ENCODE measurements at regions of chr10 and their contacts with region 1.

Region 1: GRCh38 chr10:46228563-46229071 is 58.2 kb upstream of the ANTXRL start:
- DNase-seq: peak; percentile 70
- ATAC-seq: peak; percentile 75
- H3K4me3 Mint-ChIP-seq: no peak overlapping the region
- H3K27ac Mint-ChIP-seq: no peak overlapping the region
- H3K4me1 Mint-ChIP-seq: no peaks in the 10 kb centered on the region
- H3K27me3 Mint-ChIP-seq: no peaks in the 10 kb centered on the region

Region 2: DNA sequence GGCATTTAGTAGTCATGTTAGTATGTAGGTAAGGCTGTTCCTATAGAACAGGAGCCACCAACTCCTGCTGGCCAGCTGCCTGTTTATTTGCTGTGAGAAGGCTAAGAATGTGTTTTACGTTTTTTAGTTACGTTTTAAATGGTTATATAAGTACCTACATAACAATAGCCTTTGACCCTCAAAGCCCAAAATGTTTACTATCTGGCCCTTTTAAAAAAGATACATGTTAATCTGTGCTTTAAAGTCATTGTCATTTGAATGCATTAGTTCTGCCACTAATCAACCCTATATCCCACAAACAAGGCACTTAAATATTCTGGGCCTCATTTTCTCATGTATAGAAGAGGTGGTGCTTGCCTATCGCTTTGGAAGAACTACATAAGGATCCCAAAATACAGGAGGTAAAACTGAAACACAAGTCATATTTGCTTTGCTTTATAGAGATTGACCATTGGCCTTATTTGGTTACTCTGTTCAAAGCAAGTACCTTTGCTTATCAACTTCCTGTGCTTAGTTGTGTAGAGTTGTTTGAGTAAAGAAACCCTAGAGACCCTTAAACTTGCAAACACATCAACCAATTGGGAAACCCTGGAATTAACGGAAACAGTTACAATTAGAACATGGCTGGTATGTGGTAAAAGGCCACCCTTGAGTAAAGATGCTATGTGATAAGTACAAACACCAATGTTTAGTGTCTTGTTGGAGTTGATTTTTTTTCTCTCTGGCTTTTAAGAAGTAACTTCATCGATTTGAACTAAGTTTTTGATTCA is 230.4 kb before region 1 on chr10:
- CTCF ChIA-PET with region 1: no interaction called
- POLR2A ChIA-PET with region 1: no interaction called
- DNase-seq: no peak
- ATAC-seq: no peak
- H3K4me3 Mint-ChIP-seq: no peak overlapping the region
- H3K27ac Mint-ChIP-seq: no peak overlapping the region
- H3K4me1 Mint-ChIP-seq: no peaks in the 10 kb centered on the region
- H3K27me3 Mint-ChIP-seq: no peaks in the 10 kb centered on the region

Region 3: GRCh38 chr10:46239247-46239646 is 10.6 kb after region 1 on chr10:
- CTCF ChIA-PET with region 1: interaction called, 11 read pairs
- POLR2A ChIA-PET with region 1: interaction called, 3 read pairs
- DNase-seq: no peak
- ATAC-seq: no peak
- H3K4me3 Mint-ChIP-seq: no peak overlapping the region
- H3K27ac Mint-ChIP-seq: no peak overlapping the region
- H3K4me1 Mint-ChIP-seq: peaks cover 26% of the 10 kb centered on the region
- H3K27me3 Mint-ChIP-seq: no peaks in the 10 kb centered on the region

Region 4: DNA sequence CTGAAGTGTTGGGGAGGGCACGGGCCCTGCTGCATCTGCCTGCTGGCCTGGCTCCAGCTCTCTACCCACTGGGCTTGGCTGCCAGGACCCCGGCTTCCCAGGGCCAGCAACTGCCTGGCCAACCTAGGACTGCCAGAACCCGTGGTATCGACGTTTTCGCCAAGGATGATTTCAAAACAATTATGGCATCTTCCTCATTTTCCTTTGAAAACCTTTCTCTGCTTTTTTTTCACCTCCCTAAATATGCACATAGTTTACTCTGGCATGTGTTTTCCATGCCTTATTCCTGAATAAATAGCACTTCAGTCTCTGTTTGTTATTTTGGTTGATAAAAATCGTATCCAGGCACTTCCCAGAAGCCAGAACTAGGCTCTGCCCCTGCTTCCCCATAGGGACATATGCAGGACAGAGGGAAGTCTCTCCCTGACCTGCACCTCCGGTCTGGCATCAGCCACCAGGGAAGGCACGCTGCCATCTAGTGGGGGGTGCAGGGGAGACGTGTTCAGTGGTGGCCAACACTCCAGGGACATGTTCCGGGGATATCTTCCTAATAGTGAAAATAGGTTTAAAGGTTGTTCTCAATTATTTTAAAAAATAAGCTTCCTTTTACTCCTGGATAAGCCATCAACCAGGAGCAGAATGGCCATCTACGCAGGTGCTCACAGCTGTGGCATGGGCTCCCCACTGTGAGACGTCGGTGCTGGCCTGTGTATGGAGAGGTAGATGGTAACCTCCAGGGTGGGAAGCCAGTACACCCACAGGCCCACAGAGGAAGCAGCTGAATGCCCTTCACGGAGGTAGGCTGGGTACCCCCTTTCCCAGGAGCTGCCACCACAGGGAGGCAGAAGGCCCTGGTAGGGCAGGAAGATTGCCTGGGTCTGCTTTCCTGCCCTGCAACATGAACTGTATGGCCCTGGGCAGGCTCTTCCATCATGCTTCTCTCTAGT is 27.5 kb after region 1 on chr10:
- CTCF ChIA-PET with region 1: interaction called, 15 read pairs
- POLR2A ChIA-PET with region 1: no interaction called
- DNase-seq: peak; percentile 59
- ATAC-seq: peak; percentile 78
- H3K4me3 Mint-ChIP-seq: no peak overlapping the region
- H3K27ac Mint-ChIP-seq: no peak overlapping the region
- H3K4me1 Mint-ChIP-seq: peaks cover 10% of the 10 kb centered on the region
- H3K27me3 Mint-ChIP-seq: no peaks in the 10 kb centered on the region

Region 5: DNA sequence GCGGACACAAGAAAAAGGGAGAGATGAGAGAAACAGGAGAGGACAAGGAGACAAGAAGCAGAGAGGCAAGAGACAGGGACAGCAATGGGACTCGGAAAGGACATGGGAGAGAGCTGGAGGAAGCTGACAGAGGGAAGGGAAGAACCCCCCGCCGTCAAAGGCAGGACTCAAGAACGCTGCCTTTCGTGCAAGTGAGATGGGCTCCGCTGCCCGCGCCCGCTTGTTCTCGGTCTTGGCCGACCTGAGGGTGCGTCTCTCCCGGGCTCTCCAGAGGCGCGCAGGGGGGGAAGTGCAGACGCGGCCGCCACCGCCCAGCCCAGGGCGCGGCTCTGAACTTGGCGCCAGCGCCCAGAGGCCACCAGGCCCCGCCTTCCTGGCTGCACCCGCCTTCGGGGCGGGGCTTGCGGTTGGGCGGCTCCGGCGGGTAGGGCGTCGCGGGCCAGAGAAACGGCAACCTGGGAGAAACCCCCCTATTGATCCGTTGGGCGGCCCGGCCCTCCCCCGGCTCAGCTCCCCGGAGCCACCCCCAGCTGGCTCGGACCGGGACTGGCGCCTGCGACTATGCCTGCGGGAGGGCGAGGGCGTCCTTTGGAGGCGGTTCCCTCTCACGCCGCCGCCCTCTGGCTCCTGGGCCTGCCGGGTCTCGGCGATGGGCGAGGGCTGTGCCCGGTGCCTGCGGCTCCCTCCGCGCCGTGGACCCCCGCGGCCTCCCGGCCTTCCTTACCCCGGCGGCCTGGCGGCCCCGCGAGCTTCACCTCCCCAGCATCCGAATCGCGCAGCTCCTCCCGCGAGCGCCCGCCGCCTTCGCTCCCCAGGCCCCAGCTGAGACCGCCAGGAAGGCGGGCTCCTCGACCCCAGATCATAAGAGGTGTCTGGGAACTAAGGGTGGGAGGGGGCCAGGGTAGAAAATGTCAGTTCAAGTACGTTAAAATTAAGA is 55.9 kb after region 1 on chr10:
- CTCF ChIA-PET with region 1: no interaction called
- POLR2A ChIA-PET with region 1: no interaction called
- DNase-seq: peak; percentile 84
- ATAC-seq: peak; percentile 88
- H3K4me3 Mint-ChIP-seq: peak overlapping the region; percentile 78
- H3K27ac Mint-ChIP-seq: peak overlapping the region; percentile 87
- H3K4me1 Mint-ChIP-seq: peaks cover 34% of the 10 kb centered on the region
- H3K27me3 Mint-ChIP-seq: peaks cover 21% of the 10 kb centered on the region

Region 6: GRCh38 chr10:46299536-46300369 is 71.1 kb after region 1 on chr10:
- CTCF ChIA-PET with region 1: no interaction called
- POLR2A ChIA-PET with region 1: no interaction called
- DNase-seq: no peak
- ATAC-seq: no peak
- H3K4me3 Mint-ChIP-seq: no peak overlapping the region
- H3K27ac Mint-ChIP-seq: peak overlapping the region; percentile 31
- H3K4me1 Mint-ChIP-seq: peaks cover 24% of the 10 kb centered on the region
- H3K27me3 Mint-ChIP-seq: no peaks in the 10 kb centered on the region

Region 7: DNA sequence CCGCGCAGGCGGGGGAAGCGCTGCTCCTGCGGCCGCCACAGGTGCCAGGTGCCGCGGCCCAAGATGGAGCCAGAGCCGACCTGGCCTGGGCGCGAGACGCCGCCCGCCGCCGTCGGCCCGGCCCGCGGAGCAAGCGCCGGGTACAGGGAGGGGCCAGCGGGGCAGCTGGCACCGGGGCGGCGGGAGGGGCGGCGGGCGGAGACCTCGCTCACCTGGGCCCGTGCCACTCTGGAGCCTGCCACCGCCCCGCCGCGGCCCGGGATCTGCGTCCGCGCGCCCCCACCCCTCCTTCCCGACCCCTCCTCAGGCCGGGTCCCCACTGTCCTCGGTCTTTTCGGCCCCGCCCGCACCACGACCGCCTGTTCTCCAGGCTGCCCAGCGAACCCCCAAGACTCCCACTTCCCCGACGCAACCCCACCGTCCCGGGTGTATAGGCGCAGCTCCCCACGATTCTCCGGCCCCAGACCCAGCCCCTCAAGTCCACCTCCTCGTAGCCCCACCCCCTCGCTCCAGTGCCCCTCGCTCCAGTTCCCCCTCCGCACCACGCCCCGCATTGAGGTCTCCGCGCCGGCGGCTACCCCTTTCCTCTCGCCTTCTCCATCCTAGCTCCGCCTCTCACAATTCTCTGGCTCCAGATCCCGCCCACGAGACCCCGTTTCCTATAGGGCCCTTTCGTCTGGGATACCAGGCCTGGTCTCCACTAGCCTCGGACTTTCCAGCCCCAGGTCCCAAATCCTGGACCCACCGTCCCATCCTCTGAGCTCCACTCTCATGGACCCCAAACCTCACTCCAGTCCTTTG is 328.1 kb after region 1 on chr10 and contains the start of gene GPRIN2:
- CTCF ChIA-PET with region 1: no interaction called
- POLR2A ChIA-PET with region 1: no interaction called
- DNase-seq: peak; percentile 18
- ATAC-seq: peak; percentile 36
- H3K4me3 Mint-ChIP-seq: no peak within 1 kb of the TSS
- H3K27ac Mint-ChIP-seq: no peak within 1 kb of the TSS
- H3K4me1 Mint-ChIP-seq: peaks cover 3% of the 10 kb centered on the region
- H3K27me3 Mint-ChIP-seq: peaks cover 24% of the 10 kb centered on the region
- total RNA-seq, gene GPRIN2: not detected